H1 (cell line): ENCODE measurements at regions of chr7 and their contacts with region 1.

Region 1: DNA sequence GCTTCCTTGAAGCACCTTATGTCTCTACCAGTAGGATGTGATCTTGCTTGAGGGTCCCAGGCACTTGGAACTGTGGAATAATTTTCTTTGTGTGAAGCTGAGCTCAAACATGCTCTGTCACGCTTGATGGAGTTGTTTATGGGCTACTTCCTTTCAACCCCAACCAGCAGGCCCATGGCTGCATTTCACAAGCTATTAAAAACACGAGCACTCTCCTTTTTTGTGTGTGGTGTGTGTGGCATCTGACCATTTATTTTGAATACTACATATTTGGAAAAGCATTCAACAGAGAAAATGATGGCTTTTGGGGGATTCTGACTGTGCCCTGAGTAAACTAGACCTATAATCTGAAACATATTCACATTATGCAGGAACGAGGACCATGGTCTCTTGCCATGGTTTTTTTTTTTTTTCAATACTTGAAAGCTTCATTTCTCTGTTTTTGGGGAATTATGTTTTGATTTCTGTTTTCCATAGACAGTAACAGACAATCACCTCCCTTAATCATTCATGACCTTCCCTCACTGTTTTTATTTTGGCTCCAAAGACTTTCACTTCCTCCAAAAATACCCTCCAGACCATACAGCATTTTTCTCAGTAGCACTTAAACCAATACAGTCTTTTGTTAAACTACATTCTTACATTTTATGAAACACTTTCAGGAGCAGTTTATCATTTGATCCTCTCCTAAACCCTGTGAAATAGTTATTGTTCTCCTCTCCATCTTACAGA is 233.6 kb upstream of the BMPER start:
- DNase-seq: no peak
- H3K4me3 ChIP-seq: no peak overlapping the region
- H3K27ac ChIP-seq: no peak overlapping the region
- H3K4me1 ChIP-seq: peaks cover 0 to 15% (median 6%) of the 10 kb centered on the region in 4 experiments; a peak in 6 of 7 replicates
- H3K27me3 ChIP-seq: no peaks in the 10 kb centered on the region
- CTCF ChIP-seq: no peak
- EP300 ChIP-seq: no peak
- POLR2A ChIP-seq: no peak
- RAD21 ChIP-seq: no peak

Region 2: GRCh38 chr7:33423646-33424020 is 248.1 kb before region 1 on chr7:
- CTCF ChIA-PET with region 1: interaction called, 16 read pairs
- POLR2A ChIA-PET with region 1: no interaction called
- DNase-seq: peak; percentile 3 to 67
- H3K4me3 ChIP-seq: no peak overlapping the region
- H3K27ac ChIP-seq: no peak overlapping the region
- H3K4me1 ChIP-seq: peaks cover 0 to 4% (median 1%) of the 10 kb centered on the region in 4 experiments; a peak in 2 of 7 replicates
- H3K27me3 ChIP-seq: no peaks in the 10 kb centered on the region
- CTCF ChIP-seq: peak in 2 of 3 experiments; percentile 50 to 52; a peak in 2 of 4 replicates
- EP300 ChIP-seq: no peak
- POLR2A ChIP-seq: no peak
- RAD21 ChIP-seq: peak; percentile 73 to 76

Region 3: GRCh38 chr7:33448035-33448434 is 223.7 kb before region 1 on chr7:
- CTCF ChIA-PET with region 1: no interaction called
- POLR2A ChIA-PET with region 1: no interaction called
- DNase-seq: no peak
- H3K4me3 ChIP-seq: no peak overlapping the region
- H3K27ac ChIP-seq: no peak overlapping the region
- H3K4me1 ChIP-seq: no peaks in the 10 kb centered on the region
- H3K27me3 ChIP-seq: no peaks in the 10 kb centered on the region
- CTCF ChIP-seq: no peak
- EP300 ChIP-seq: no peak
- POLR2A ChIP-seq: no peak
- RAD21 ChIP-seq: no peak

Region 4: GRCh38 chr7:33459340-33459751 is 212.4 kb before region 1 on chr7:
- CTCF ChIA-PET with region 1: interaction called, 10 read pairs
- POLR2A ChIA-PET with region 1: no interaction called
- DNase-seq: peak in 1 of 2 experiments; percentile 5
- H3K4me3 ChIP-seq: no peak overlapping the region
- H3K27ac ChIP-seq: no peak overlapping the region
- H3K4me1 ChIP-seq: no peaks in the 10 kb centered on the region
- H3K27me3 ChIP-seq: no peaks in the 10 kb centered on the region
- CTCF ChIP-seq: peak; percentile 37 to 74 (median 62)
- EP300 ChIP-seq: no peak
- POLR2A ChIP-seq: no peak
- RAD21 ChIP-seq: peak; percentile 79 to 82

Region 5: GRCh38 chr7:33661430-33662160 is 10.1 kb before region 1 on chr7:
- CTCF ChIA-PET with region 1: interaction called, 14 read pairs
- POLR2A ChIA-PET with region 1: no interaction called
- DNase-seq: no peak
- H3K4me3 ChIP-seq: no peak overlapping the region
- H3K27ac ChIP-seq: no peak overlapping the region
- H3K4me1 ChIP-seq: no peaks in the 10 kb centered on the region
- H3K27me3 ChIP-seq: no peaks in the 10 kb centered on the region
- CTCF ChIP-seq: no peak
- EP300 ChIP-seq: no peak
- POLR2A ChIP-seq: no peak
- RAD21 ChIP-seq: no peak

Region 6: DNA sequence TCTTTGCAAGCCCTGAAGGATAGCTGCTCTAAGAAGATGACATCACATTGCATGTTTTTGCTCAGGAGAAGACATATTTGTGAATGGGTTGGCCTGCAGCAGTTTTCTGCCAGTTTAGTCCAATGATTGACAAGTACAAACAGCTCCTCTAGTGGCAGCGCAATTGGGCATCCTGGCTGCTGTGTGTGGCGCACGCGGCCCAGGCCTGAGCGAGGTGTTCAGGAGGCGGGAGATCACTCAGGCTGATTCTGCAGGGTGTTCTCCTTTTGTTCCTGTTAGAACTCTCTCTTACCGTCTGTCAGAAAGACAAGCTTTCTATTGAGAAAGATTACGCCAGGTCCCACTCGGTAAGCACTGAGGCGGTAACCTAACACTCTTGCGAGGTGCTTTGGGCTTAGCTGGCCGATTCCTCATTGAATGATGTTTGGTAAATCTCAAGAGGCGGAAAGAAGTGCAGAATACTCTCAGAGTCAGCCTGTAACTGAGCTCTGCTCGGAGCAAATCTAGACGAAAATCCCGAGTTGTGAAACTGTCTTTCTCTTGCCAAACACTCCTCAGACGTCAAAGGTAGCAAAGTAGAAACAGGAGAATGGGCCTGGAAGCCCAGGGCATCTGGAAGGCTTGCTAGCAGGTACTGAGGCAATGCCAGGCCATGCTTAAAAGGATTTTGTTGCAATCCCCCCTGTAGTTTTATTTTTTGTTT is 14.4 kb after region 1 on chr7:
- CTCF ChIA-PET with region 1: interaction called, 24 read pairs
- POLR2A ChIA-PET with region 1: no interaction called
- DNase-seq: no peak
- H3K4me3 ChIP-seq: no peak overlapping the region
- H3K27ac ChIP-seq: no peak overlapping the region
- H3K4me1 ChIP-seq: no peaks in the 10 kb centered on the region
- H3K27me3 ChIP-seq: no peaks in the 10 kb centered on the region
- CTCF ChIP-seq: peak; percentile 26 to 49 (median 44); a peak in 3 of 4 replicates
- EP300 ChIP-seq: no peak
- POLR2A ChIP-seq: no peak
- RAD21 ChIP-seq: no peak

Region 7: GRCh38 chr7:33854801-33855350 is 183.2 kb after region 1 on chr7:
- CTCF ChIA-PET with region 1: no interaction called
- POLR2A ChIA-PET with region 1: no interaction called
- DNase-seq: no peak
- H3K4me3 ChIP-seq: no peak overlapping the region
- H3K27ac ChIP-seq: no peak overlapping the region
- H3K4me1 ChIP-seq: no peaks in the 10 kb centered on the region
- H3K27me3 ChIP-seq: no peaks in the 10 kb centered on the region
- CTCF ChIP-seq: no peak
- EP300 ChIP-seq: no peak
- POLR2A ChIP-seq: no peak
- RAD21 ChIP-seq: no peak